PC-9 (cell line): ENCODE measurements at regions of chr2 and their contacts with region 1.

Region 1: DNA sequence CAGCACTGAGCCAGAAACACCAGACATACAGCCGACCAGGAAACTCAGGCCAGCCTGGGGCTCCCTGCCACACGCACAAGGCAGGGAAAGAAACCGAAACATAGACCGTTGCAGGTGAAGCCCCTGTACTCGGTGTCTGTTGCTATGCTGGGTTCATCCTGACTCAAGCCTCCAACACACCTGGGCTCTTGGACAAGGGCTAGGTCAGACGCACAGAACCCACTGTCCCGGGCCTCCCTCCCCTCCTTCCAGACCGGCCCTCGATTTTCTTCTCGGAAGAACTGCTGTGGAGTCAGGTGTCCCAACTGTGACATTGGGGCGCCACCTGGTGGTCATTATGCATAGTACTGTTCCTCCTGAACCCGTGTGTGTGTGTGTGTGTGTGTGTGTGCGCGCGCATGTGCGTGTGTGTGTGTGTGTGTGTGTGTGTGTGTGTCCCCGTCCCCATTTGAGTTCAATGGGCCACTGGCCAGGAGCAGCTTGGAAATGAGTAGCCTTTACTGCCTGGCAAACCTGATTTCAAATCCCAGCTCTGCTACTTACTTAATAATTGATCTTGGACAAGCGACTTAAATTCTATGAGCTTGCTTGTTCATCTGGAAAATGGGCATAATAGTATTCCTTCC is 55.4 kb upstream of the GLI2 start:
- DNase-seq: peak; percentile 70 to 78
- H3K4me3 ChIP-seq: no peak overlapping the region
- H3K27ac ChIP-seq: no peak overlapping the region
- H3K4me1 ChIP-seq: no peaks in the 10 kb centered on the region
- H3K27me3 ChIP-seq: 0 out of 2 replicates have a peak, but pooled peaks cover 6% of the 10 kb centered on the region
- CTCF ChIP-seq: peak; percentile 87

Region 2: GRCh38 chr2:119290859-119291587 is 1389.2 kb before region 1 on chr2:
- CTCF ChIA-PET with region 1: interaction called, 15 read pairs
- POLR2A ChIA-PET with region 1: no interaction called
- intact Hi-C with region 1: no loop called
- DNase-seq: peak; percentile 70 to 85
- H3K4me3 ChIP-seq: no peak overlapping the region
- H3K27ac ChIP-seq: no peak overlapping the region
- H3K4me1 ChIP-seq: peaks cover 5% of the 10 kb centered on the region
- H3K27me3 ChIP-seq: no peaks in the 10 kb centered on the region
- CTCF ChIP-seq: peak; percentile 99

Region 3: GRCh38 chr2:119702918-119703401 is 977.3 kb before region 1 on chr2:
- CTCF ChIA-PET with region 1: no interaction called
- POLR2A ChIA-PET with region 1: no interaction called
- intact Hi-C with region 1: loop called (anchors 5 kb)
- DNase-seq: peak; percentile 56 to 80
- H3K4me3 ChIP-seq: no peak overlapping the region
- H3K27ac ChIP-seq: no peak overlapping the region
- H3K4me1 ChIP-seq: no peaks in the 10 kb centered on the region
- H3K27me3 ChIP-seq: no peaks in the 10 kb centered on the region
- CTCF ChIP-seq: peak; percentile 100

Region 4: DNA sequence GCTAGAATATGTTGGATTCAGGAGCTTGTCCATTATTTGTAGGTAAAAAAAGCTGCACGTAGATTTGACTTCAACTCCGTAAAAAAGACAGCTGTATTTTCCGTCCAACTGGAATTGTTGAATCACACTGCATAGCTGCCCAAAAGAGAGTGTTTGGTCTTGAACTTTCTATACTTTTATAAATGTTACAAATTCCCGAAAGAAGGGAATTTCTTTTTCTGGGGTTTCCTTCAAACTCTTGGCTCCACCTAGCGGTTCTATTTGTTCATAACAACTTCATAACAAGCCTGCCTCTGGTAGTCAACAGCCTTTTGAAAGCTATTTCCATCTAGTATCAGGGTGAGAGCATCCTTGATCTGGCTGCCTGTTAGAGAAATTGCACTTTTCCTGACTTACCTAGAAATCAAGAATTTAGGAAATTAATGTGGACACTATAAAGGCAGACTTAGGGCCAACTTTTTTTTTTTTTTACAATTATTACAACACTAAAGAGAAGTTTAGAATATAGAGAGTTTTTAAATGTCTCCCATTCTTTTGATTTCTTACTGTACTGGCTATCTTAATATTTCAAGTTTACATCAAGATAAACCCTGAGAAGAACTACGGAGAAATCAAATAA is 505.2 kb before region 1 on chr2:
- CTCF ChIA-PET with region 1: no interaction called
- POLR2A ChIA-PET with region 1: no interaction called
- intact Hi-C with region 1: loop called (anchors 5 kb)
- DNase-seq: peak; percentile 25 to 42
- H3K4me3 ChIP-seq: no peak overlapping the region
- H3K27ac ChIP-seq: no peak overlapping the region
- H3K4me1 ChIP-seq: no peaks in the 10 kb centered on the region
- H3K27me3 ChIP-seq: no peaks in the 10 kb centered on the region
- CTCF ChIP-seq: peak; percentile 97

Region 5: DNA sequence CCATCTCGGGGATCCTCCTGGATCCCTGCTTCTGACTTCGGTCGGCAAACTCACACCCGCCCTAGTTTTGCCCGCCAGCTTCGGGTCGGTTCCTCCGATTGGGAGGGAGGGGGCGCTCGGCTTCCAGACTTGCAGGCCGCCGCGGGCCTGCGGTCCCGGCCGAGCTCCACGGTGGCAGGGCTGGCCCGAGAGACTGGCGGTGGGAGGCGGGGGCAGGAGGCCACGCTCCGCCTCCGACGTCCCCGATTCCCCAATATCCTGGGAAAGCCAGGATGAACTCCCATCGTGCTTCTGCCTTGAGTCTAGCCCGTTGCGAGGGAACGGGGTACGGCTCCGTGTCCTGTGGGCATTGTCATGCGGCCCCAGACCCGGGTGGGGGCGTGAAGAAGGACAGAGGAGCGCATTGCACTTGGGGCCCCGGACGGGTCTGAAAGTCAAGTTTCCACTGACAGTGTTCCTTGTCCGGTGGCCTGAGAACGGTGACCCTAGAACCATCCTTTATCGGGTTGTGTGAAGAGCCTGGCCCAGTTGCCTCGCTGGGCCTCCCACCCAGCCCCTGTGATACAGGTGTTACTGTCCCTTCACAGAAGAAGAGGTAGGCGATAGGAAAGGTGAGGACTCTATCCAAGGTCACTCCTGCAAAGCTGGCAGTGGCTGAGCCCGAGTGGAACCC is 336.7 kb before region 1 on chr2:
- CTCF ChIA-PET with region 1: interaction called, 3 read pairs
- POLR2A ChIA-PET with region 1: no interaction called
- intact Hi-C with region 1: loop called (anchors 1 kb)
- DNase-seq: peak; percentile 80 to 87
- H3K4me3 ChIP-seq: peak overlapping the region; percentile 77; the same call in 1 of the 2 replicates
- H3K27ac ChIP-seq: no peak overlapping the region
- H3K4me1 ChIP-seq: peaks cover 21% of the 10 kb centered on the region
- H3K27me3 ChIP-seq: 0 out of 2 replicates have a peak, but pooled peaks cover 7% of the 10 kb centered on the region
- CTCF ChIP-seq: peak; percentile 96

Region 6: DNA sequence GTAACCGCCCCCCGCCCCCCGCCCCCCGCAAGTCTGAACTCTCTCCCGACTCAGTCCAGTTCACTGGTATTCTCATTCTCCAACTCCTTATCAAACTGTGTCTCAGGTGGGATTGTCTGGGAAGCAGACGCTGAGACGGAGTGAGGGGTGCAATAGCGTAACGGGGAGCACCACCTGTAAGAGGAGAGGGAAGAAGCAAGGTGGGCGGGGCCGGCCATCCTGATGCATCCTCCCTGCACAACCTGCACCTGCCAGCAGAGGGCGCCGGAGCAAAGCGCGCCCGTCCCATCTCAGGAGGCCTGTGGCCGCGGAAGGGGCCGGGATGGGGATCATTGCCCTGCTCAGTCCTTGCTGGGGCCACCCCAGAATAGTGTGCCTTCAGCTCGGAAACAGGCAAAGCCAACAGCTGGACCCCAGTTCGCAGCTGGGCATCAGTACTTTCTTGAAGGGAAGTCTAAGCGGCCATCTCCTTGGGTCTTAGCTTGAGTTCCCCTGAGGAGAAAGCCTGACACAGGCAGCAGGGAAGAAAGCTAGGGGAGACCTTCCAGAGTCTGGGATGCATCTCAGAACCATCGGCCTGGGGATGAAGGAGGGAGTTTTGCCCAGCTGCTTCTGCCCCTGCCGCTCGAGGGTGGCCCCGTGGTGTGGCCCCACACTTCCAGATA is 396.8 kb after region 1 on chr2:
- CTCF ChIA-PET with region 1: interaction called, 10 read pairs
- POLR2A ChIA-PET with region 1: no interaction called
- intact Hi-C with region 1: no loop called
- DNase-seq: peak; percentile 68 to 86
- H3K4me3 ChIP-seq: peak overlapping the region; percentile 27; the same call in 1 of the 2 replicates
- H3K27ac ChIP-seq: no peak overlapping the region
- H3K4me1 ChIP-seq: peaks cover 16% of the 10 kb centered on the region; the same call in 1 of the 2 replicates
- H3K27me3 ChIP-seq: 0 out of 2 replicates have a peak, but pooled peaks cover 5% of the 10 kb centered on the region
- CTCF ChIP-seq: peak; percentile 100